ENCODE measurements at regions of chr3 and their contacts with region 1.

Region 1: GRCh38 chr3:183884427-183885296 is at the start of gene PARL:
- DNase-seq: peak; percentile 98
- H3K4me3 Mint-ChIP-seq: peak within 1 kb of the TSS; percentile 94
- H3K27ac Mint-ChIP-seq: peak within 1 kb of the TSS; percentile 88
- H3K4me1 Mint-ChIP-seq: peaks cover 31% of the 10 kb centered on the region
- H3K27me3 Mint-ChIP-seq: no peaks in the 10 kb centered on the region
- total RNA-seq, gene PARL: 92.0 to 92.8 TPM

Region 2: DNA sequence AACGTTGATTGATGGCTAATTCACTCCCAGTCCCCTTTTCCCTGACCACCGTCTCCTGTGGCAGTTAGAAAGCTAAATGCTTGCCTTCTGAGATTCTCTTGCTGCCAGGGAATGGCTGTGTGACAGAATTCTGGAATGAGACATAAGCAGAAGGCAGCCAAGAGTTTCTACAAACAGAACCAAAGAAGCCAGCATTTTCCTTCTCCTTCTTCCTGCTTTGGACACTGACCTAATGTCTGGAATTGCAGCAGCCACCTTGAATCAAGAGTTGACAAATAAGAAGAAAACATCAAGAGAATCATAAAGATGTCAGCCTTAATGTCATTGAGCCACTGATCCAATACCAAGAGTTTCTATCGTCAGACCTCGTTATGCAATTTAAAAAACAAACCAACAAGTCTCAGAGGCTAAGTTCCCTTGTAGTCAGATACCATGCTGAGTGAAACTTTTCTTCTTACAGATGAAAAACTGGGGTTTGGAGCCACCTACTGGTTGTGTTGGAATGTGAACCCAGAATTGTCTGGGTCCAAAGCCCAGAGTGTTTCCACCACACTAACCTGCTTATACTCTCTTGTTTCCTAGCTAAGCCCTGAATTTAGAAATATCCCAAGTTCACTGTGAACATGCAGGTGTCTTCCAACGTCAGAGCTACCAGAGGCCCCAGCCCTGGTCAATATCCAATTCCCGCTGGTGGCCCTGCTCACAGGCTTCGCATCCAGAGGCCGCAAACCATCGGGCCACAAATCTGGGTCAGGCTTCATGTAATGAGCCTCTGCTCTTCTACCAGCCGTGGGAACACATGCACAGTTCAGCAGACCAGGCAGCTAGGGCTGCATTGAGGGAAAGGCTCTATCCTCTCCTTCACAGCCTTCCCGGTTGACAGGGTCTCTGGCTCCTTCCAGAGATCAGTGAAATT is 498.7 kb before region 1 on chr3:
- CTCF ChIA-PET with region 1: no interaction called
- intact Hi-C with region 1: loop called (anchors 1 kb)
- DNase-seq: peak; percentile 79
- H3K4me3 Mint-ChIP-seq: no peak overlapping the region
- H3K27ac Mint-ChIP-seq: no peak overlapping the region
- H3K4me1 Mint-ChIP-seq: peaks cover 9% of the 10 kb centered on the region
- H3K27me3 Mint-ChIP-seq: no peaks in the 10 kb centered on the region

Region 3: GRCh38 chr3:183766745-183767606 is 117.7 kb before region 1 on chr3:
- CTCF ChIA-PET with region 1: interaction called, 4 read pairs
- intact Hi-C with region 1: loop called (anchors 1 kb)
- DNase-seq: peak; percentile 89
- H3K4me3 Mint-ChIP-seq: no peak overlapping the region
- H3K27ac Mint-ChIP-seq: no peak overlapping the region
- H3K4me1 Mint-ChIP-seq: peaks cover 11% of the 10 kb centered on the region
- H3K27me3 Mint-ChIP-seq: no peaks in the 10 kb centered on the region

Region 4: DNA sequence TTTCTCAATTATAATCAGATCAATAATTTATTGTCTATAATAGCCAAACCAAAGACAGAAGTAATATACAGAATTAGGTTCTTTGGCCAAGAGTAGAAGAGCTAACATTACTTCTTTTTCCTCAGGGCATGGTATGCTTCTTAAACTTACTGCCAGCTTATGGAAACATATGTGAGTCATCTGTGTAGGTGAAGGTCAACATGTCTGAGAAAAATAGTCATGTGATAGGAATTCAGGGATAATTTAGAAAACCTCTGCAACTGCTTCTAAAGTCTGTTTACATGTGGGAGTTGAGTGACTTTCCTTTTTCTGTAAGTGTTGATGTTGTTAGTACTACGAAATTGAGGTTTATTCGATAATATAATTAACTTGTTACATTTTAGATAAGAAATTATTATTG is 40.1 kb before region 1 on chr3:
- CTCF ChIA-PET with region 1: interaction called, 12 read pairs
- intact Hi-C with region 1: no loop called
- DNase-seq: no peak
- H3K4me3 Mint-ChIP-seq: no peak overlapping the region
- H3K27ac Mint-ChIP-seq: no peak overlapping the region
- H3K4me1 Mint-ChIP-seq: peaks cover 13% of the 10 kb centered on the region
- H3K27me3 Mint-ChIP-seq: no peaks in the 10 kb centered on the region

Region 5: DNA sequence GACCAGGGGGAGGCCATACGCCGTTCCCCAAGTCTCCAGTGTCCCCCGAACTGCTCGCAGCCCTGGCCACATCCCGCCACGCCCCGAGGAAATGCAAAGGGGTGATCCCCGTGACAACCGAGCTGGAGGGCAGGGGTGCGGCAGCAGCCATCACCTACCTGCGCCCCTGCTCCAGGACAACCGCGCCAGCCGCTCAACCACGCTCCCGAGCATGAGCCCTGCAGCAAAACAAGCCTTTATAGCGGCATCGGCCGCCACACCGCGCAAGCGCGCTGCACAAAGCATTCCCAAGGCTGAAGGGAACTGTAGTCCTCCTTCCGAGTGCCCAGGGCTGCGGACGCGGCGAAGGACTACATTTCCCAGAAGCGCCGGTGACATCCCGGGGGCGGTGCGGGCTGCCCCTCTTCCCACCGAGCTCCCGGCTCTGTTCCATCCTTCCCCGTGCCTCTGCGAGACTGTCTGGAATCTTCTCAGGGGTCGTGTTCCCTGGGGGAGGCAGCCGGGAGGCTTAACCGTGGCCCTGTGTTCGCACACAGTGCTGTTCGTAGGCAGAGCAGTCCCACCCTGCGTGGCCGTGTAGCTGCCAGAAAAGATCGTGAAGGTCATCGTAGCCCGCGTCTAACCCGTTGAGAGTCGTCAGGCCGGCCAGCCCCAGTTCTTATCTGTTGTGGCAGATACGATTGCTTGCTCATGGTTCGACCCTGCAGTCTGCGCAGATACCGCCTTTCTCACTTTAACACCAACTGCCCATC is 133.2 kb after region 1 on chr3 and contains the start of gene ABCC5:
- CTCF ChIA-PET with region 1: interaction called, 3 read pairs
- intact Hi-C with region 1: loop called (anchors 5 kb)
- DNase-seq: peak; percentile 88
- H3K4me3 Mint-ChIP-seq: peak within 1 kb of the TSS; percentile 98
- H3K27ac Mint-ChIP-seq: peak within 1 kb of the TSS; percentile 77
- H3K4me1 Mint-ChIP-seq: peaks cover 16% of the 10 kb centered on the region
- H3K27me3 Mint-ChIP-seq: no peaks in the 10 kb centered on the region
- total RNA-seq, gene ABCC5: 11.2 to 12.0 TPM

Measured in activated naive CD4-positive, alpha-beta T cell treated with anti-CD3 and anti-CD28 coated beads for 36 hours (primary cell).